ENCODE measurements at regions of chr2 and their contacts with region 1.

Region 1: GRCh38 chr2:55014962-55015939 is 35.0 kb downstream of the RTN4 start:
- DNase-seq: peak; percentile 49
- ATAC-seq: no peak
- H3K4me3 Mint-ChIP-seq: no peak overlapping the region
- H3K27ac Mint-ChIP-seq: no peak overlapping the region
- H3K4me1 Mint-ChIP-seq: peaks cover 31% of the 10 kb centered on the region
- H3K27me3 Mint-ChIP-seq: no peaks in the 10 kb centered on the region

Region 2: GRCh38 chr2:55063713-55064323 is 48.6 kb after region 1 on chr2:
- CTCF ChIA-PET with region 1: no interaction called
- POLR2A ChIA-PET with region 1: no interaction called
- DNase-seq: no peak
- ATAC-seq: peak; percentile 39
- H3K4me3 Mint-ChIP-seq: no peak overlapping the region
- H3K27ac Mint-ChIP-seq: no peak overlapping the region
- H3K4me1 Mint-ChIP-seq: peaks cover 9% of the 10 kb centered on the region
- H3K27me3 Mint-ChIP-seq: no peaks in the 10 kb centered on the region

Region 3: DNA sequence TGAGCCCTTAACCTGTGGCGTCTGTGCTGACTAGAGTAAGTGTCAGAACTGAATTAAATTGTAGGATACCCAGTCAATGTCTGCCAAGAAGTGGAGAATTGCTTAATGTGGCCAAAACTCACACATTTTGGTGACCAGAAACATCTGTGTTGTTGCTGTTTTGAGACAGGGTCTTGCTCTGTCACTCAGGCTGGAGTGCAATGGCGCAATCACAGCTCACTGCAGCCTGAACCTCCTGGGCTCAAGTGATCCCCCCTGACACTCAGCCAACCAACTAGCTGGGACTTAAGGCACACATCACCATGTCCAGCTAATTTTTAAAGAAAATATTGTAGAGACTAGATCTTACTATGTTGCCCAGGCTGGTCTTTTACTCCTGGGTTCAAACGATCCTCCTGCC is 69.4 kb after region 1 on chr2:
- CTCF ChIA-PET with region 1: no interaction called
- POLR2A ChIA-PET with region 1: no interaction called
- DNase-seq: no peak
- ATAC-seq: no peak
- H3K4me3 Mint-ChIP-seq: no peak overlapping the region
- H3K27ac Mint-ChIP-seq: no peak overlapping the region
- H3K4me1 Mint-ChIP-seq: no peaks in the 10 kb centered on the region
- H3K27me3 Mint-ChIP-seq: no peaks in the 10 kb centered on the region

Region 4: DNA sequence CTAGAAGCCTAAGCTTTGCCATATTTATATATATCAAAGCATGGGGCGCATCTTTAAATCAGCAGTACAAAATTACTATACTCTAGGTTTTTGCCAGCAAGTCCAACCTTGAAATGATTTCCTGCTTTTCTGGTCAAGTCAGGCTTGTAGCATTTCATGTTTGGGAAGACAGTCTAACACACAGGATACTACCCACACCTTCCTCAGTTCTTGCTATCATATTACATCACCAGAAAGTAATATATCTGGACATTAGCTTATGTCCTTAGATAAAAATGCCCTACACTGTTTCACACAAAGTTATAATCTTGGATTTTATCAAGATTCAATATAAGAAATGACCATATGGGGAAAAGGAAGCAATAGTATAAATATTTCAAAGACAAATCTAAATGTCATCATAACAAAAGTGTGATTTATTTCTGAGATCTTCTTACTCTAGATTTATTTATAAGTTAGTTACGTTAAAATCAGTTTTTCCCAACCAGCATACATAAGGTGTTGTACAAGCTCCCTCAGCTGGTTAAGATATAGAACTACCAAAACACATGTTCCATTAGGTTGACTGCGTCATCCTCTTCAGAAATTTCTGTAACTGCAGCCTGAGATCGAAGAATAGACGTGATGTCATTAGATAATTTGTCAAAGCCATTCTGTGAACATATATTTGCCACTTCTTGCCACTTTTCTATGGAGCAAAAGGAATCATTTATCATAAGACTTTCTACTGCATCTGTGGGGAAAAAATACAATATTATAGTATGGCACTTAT is 160.2 kb after region 1 on chr2:
- CTCF ChIA-PET with region 1: interaction called, 40 read pairs
- POLR2A ChIA-PET with region 1: no interaction called
- DNase-seq: no peak
- ATAC-seq: peak; percentile 77
- H3K4me3 Mint-ChIP-seq: no peak overlapping the region
- H3K27ac Mint-ChIP-seq: no peak overlapping the region
- H3K4me1 Mint-ChIP-seq: no peaks in the 10 kb centered on the region
- H3K27me3 Mint-ChIP-seq: no peaks in the 10 kb centered on the region